CD8-positive, alpha-beta memory T cell (primary cell): ENCODE measurements at regions of chr13 and their contacts with region 1.

Region 1: GRCh38 chr13:73572824-73573223 is 514.0 kb downstream of the KLF5 start:
- DNase-seq: no peak
- H3K4me3 ChIP-seq: no peak overlapping the region
- H3K4me3 Mint-ChIP-seq: no peak overlapping the region
- H3K27ac ChIP-seq: no peak overlapping the region
- H3K27ac Mint-ChIP-seq: no peak overlapping the region
- H3K4me1 ChIP-seq: no peaks in the 10 kb centered on the region
- H3K4me1 Mint-ChIP-seq: no peaks in the 10 kb centered on the region
- H3K27me3 ChIP-seq: no peaks in the 10 kb centered on the region
- H3K27me3 Mint-ChIP-seq: peaks cover 2 to 4% of the 10 kb centered on the region in 2 donors

Region 2: DNA sequence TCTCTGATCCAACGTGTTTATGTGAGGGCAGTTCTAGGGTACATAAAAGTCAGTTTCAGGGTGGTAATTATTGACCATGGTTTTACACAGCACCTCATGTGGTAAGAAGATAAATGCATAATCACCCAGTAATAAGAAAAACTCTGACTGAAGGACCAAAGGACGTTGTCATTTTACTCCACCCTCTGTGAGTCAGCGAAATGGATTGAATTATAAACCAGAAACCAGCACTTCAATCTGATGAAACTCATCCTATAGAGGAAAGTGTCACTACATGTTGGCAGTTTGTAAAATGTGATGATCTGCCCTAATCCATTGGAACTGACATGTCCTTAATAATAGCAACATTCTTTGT is 107.2 kb before region 1 on chr13:
- CTCF ChIA-PET with region 1: no interaction called
- POLR2A ChIA-PET with region 1: interaction called, 11 read pairs
- DNase-seq: no peak
- H3K4me3 ChIP-seq: no peak overlapping the region
- H3K4me3 Mint-ChIP-seq: no peak overlapping the region
- H3K27ac ChIP-seq: no peak overlapping the region
- H3K27ac Mint-ChIP-seq: no peak overlapping the region
- H3K4me1 ChIP-seq: no peaks in the 10 kb centered on the region
- H3K4me1 Mint-ChIP-seq: no peaks in the 10 kb centered on the region
- H3K27me3 ChIP-seq: no peaks in the 10 kb centered on the region
- H3K27me3 Mint-ChIP-seq: peaks cover 2 to 7% of the 10 kb centered on the region in 2 donors

Region 3: DNA sequence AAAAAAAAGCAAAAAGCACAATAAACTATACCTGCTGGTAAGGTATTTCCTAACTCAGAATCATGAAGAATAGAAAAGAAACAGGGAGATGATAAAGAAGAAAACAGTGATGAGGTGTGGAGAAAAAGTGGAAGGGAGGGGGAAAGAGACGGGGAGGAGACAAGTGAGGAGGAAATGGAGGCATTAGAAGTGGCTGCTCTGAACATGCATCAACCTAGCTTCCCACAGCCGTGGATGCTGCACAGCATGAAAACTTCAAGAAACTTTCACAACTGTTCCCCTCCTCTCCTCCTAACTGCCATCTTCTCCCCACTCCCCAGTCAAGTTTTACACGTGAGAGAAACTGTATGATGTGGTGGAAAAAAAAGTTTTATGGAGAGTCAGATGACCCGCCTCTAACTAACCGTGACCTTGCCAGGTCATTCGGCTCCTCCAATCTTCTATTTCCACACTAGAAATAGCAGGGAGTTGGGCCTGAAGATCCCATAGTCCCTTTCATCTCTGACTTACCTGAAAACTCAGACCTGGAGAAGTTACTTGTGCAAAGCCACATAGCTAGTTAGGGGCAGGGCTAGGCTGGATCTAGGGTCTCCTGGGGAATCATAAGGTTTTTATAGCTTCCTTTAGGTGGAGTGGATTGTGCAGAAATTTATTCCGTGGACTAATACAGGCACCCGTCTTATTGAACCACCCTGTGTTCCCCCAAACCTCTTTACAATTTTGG is 52.1 kb before region 1 on chr13:
- CTCF ChIA-PET with region 1: no interaction called
- POLR2A ChIA-PET with region 1: no interaction called
- DNase-seq: peak in 1 of 5 donors; percentile 40
- H3K4me3 ChIP-seq: peak overlapping the region; percentile 48
- H3K4me3 Mint-ChIP-seq: peak overlapping the region; percentile 76 to 89 (median 82)
- H3K27ac ChIP-seq: no peak overlapping the region
- H3K27ac Mint-ChIP-seq: peak overlapping the region in 6 of 8 donors; percentile 43 to 95 (median 69)
- H3K4me1 ChIP-seq: peaks cover 8% of the 10 kb centered on the region
- H3K4me1 Mint-ChIP-seq: peaks cover 12 to 16% (median 16%) of the 10 kb centered on the region in 3 donors
- H3K27me3 ChIP-seq: no peaks in the 10 kb centered on the region
- H3K27me3 Mint-ChIP-seq: peaks cover 0 to 2% of the 10 kb centered on the region in 2 donors

Region 4: GRCh38 chr13:73602295-73602694 is 29.5 kb after region 1 on chr13:
- CTCF ChIA-PET with region 1: no interaction called
- POLR2A ChIA-PET with region 1: no interaction called
- DNase-seq: no peak
- H3K4me3 ChIP-seq: no peak overlapping the region
- H3K4me3 Mint-ChIP-seq: no peak overlapping the region
- H3K27ac ChIP-seq: no peak overlapping the region
- H3K27ac Mint-ChIP-seq: no peak overlapping the region
- H3K4me1 ChIP-seq: no peaks in the 10 kb centered on the region
- H3K4me1 Mint-ChIP-seq: no peaks in the 10 kb centered on the region
- H3K27me3 ChIP-seq: no peaks in the 10 kb centered on the region
- H3K27me3 Mint-ChIP-seq: no peaks in the 10 kb centered on the region

Region 5: DNA sequence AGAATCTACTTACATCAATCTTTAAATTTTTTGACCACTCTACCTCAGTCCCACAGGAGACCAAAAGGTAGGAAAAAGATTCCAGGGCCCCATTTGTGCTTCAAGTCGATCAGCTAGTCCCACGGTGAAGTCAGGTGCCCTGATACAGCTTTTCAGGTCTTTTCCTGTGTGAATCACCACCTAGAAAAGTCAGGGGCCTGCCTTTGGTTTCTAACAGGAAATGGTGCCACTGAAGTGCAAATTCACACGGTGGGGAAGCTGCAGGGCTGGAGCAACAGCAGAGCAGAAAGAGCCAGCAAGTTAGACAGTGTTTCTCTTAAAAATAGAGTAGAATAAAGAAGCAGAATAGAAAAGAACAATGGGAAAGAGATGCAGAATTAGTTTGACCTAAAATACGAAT is 453.9 kb after region 1 on chr13:
- CTCF ChIA-PET with region 1: no interaction called
- POLR2A ChIA-PET with region 1: no interaction called
- DNase-seq: peak; percentile 53 to 81 (median 69)
- H3K4me3 ChIP-seq: peak overlapping the region; percentile 32
- H3K4me3 Mint-ChIP-seq: peak overlapping the region; percentile 73 to 92 (median 85)
- H3K27ac ChIP-seq: no peak overlapping the region
- H3K27ac Mint-ChIP-seq: peak overlapping the region; percentile 81 to 97 (median 90)
- H3K4me1 ChIP-seq: peaks cover 65% of the 10 kb centered on the region
- H3K4me1 Mint-ChIP-seq: peaks cover 83 to 97% (median 96%) of the 10 kb centered on the region in 3 donors
- H3K27me3 ChIP-seq: no peaks in the 10 kb centered on the region
- H3K27me3 Mint-ChIP-seq: no peaks in the 10 kb centered on the region